SK-N-SH (cell line): ENCODE measurements at regions of chr9 and their contacts with region 1.

Region 1: DNA sequence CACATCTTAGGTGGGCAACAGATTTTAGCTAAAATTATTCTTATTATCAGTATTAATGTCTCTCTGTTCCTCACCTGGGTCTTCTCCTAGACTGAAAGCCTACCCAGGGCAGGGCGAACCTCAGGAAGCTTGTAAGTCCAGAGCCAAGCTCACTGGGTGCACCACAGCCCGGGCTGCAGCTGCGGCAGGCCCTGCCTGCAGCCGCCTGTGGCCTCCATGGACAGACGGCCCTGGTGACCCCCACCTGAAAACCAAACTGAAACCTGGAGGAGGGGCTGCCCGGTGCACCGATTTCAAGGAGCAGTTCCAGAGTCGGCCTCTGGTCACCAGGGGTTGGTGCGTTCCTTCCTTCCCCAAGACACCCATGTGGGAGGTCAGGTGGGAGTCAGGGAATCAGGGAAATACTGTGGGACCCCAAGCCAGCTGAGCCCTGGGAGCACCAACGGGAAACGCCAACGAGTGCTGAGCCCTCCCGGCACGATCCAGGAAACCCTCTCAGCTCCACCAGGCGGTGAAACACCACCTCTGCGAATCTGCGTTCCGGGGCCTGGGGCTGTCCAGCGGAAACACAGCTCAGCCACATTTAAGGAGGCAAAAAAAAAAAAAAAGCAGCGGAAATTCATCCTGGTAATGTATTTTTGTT is 68.6 kb upstream of the PPP1R26 start:
- DNase-seq: peak; percentile 26
- H3K4me3 ChIP-seq: no peak overlapping the region
- H3K27ac ChIP-seq: no peak overlapping the region
- H3K4me1 ChIP-seq: no peaks in the 10 kb centered on the region; a peak in 1 of 4 replicates
- H3K27me3 ChIP-seq: no peaks in the 10 kb centered on the region
- CTCF ChIP-seq: no peak
- EP300 ChIP-seq: no peak
- RAD21 ChIP-seq: no peak

Region 2: DNA sequence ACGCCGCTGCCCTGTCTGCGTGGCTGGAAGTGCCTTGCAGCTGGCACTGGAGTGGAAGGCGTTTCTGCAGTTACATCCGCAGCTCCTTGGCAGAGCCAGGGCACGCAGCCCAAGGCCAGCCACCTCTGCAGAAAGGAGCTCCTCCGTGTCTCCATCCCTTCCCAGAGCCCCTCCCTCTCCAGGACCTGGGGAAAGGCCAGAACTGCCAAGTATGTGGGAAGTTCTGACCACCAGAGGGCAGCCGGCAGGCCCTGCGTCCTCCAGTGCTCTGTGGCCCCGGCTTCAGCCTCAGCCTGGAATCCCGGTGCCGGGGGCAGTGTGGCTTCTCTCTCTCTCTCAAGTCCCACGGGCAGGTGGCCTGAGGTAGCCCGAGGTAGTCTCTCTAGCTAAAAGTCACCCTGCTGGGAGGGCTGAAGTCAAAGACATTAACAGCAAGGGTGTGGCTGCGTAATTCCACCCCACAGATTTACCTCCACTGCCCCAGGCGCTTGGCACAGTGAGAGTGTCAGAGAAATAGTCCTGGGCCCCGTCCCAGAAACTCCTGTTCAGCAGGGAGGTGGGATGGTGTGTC is 632.0 kb before region 1 on chr9:
- CTCF ChIA-PET with region 1: interaction called, 31 read pairs
- POLR2A ChIA-PET with region 1: no interaction called
- DNase-seq: peak; percentile 84
- H3K4me3 ChIP-seq: no peak overlapping the region
- H3K27ac ChIP-seq: no peak overlapping the region
- H3K4me1 ChIP-seq: peaks cover 0 to 13% of the 10 kb centered on the region in 2 experiments; a peak in 1 of 4 replicates
- H3K27me3 ChIP-seq: no peaks in the 10 kb centered on the region
- CTCF ChIP-seq: peak; percentile 58
- EP300 ChIP-seq: no peak
- RAD21 ChIP-seq: peak; percentile 63

Region 3: DNA sequence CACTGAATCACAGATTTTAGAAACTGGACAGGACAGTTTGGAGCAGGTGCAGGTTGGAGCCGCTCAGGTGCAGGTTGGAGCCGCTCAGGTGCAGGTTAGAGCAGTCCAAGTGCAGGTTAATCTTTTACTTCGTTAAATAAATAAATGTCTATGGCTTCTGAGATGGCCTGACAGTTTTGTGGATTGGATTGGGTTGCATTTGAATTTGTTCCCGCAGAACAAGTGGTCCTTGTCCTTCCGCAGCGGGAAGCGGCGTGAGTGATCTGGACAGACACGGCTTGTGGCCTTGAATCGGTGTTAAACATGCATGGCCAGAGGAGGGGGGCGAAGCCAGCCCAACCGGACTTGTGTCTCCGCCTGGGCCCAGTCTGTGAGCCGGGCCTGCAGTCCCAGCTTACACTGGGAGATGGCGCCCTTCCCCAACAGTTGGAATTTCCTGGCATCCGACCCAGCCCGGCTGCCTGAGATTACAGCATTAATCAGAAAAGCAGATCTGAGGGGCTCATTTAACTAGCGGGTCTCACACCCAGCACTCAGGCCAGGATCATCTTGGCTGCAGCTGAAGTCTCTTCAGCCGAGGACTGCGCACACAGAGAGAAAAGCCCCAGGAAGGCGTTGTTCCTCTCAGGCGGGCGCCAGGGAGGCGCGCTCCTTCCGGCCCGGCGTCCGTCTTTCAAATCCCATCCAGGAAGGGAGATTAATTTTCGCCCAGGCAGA is 325.0 kb before region 1 on chr9:
- CTCF ChIA-PET with region 1: interaction called, 290 read pairs
- POLR2A ChIA-PET with region 1: no interaction called
- DNase-seq: peak; percentile 92
- H3K4me3 ChIP-seq: peak overlapping the region; percentile 17 to 48; a peak in 3 of 4 replicates
- H3K27ac ChIP-seq: no peak overlapping the region
- H3K4me1 ChIP-seq: peaks cover 0 to 10% of the 10 kb centered on the region in 2 experiments; a peak in 1 of 4 replicates
- H3K27me3 ChIP-seq: no peaks in the 10 kb centered on the region
- CTCF ChIP-seq: peak; percentile 91
- EP300 ChIP-seq: no peak
- RAD21 ChIP-seq: peak; percentile 98

Region 4: GRCh38 chr9:135214054-135214640 is 196.8 kb before region 1 on chr9:
- CTCF ChIA-PET with region 1: interaction called, 17 read pairs
- POLR2A ChIA-PET with region 1: no interaction called
- DNase-seq: peak; percentile 57
- H3K4me3 ChIP-seq: no peak overlapping the region
- H3K27ac ChIP-seq: no peak overlapping the region
- H3K4me1 ChIP-seq: peaks cover 0 to 45% of the 10 kb centered on the region in 2 experiments; a peak in 2 of 4 replicates
- H3K27me3 ChIP-seq: no peaks in the 10 kb centered on the region
- CTCF ChIP-seq: no peak
- EP300 ChIP-seq: no peak
- RAD21 ChIP-seq: no peak

Region 5: GRCh38 chr9:135359764-135360163 is 51.2 kb before region 1 on chr9:
- CTCF ChIA-PET with region 1: interaction called, 12 read pairs
- POLR2A ChIA-PET with region 1: no interaction called
- DNase-seq: no peak
- H3K4me3 ChIP-seq: no peak overlapping the region
- H3K27ac ChIP-seq: no peak overlapping the region
- H3K4me1 ChIP-seq: peaks cover 0 to 9% of the 10 kb centered on the region in 2 experiments; a peak in 1 of 4 replicates
- H3K27me3 ChIP-seq: no peaks in the 10 kb centered on the region
- CTCF ChIP-seq: no peak
- EP300 ChIP-seq: no peak
- RAD21 ChIP-seq: no peak

Region 6: GRCh38 chr9:135422341-135422944 is 11.5 kb after region 1 on chr9:
- CTCF ChIA-PET with region 1: interaction called, 46 read pairs
- POLR2A ChIA-PET with region 1: no interaction called
- DNase-seq: no peak
- H3K4me3 ChIP-seq: no peak overlapping the region
- H3K27ac ChIP-seq: no peak overlapping the region
- H3K4me1 ChIP-seq: no peaks in the 10 kb centered on the region
- H3K27me3 ChIP-seq: no peaks in the 10 kb centered on the region
- CTCF ChIP-seq: no peak
- EP300 ChIP-seq: no peak
- RAD21 ChIP-seq: no peak

Region 7: GRCh38 chr9:135647884-135648283 is 236.9 kb after region 1 on chr9:
- CTCF ChIA-PET with region 1: no interaction called
- POLR2A ChIA-PET with region 1: no interaction called
- DNase-seq: no peak
- H3K4me3 ChIP-seq: no peak overlapping the region
- H3K27ac ChIP-seq: no peak overlapping the region
- H3K4me1 ChIP-seq: no peaks in the 10 kb centered on the region
- H3K27me3 ChIP-seq: no peaks in the 10 kb centered on the region
- CTCF ChIP-seq: no peak
- EP300 ChIP-seq: no peak
- RAD21 ChIP-seq: no peak